CD4-positive, alpha-beta memory T cell (primary cell): ENCODE measurements at regions of chr17 and their contacts with region 1.

Region 1: GRCh38 chr17:47941236-47941994 is at the start of gene PNPO:
- DNase-seq: peak; percentile 93 to 98 (median 94)
- H3K4me3 ChIP-seq: peak within 1 kb of the TSS; percentile 82 to 85
- H3K4me3 Mint-ChIP-seq: peak within 1 kb of the TSS; percentile 77 to 95 (median 88)
- H3K27ac ChIP-seq: peak within 1 kb of the TSS; percentile 76
- H3K27ac Mint-ChIP-seq: peak within 1 kb of the TSS; percentile 62 to 96 (median 92)
- H3K4me1 ChIP-seq: peaks cover 29% of the 10 kb centered on the region
- H3K4me1 Mint-ChIP-seq: peaks cover 20 to 46% (median 32%) of the 10 kb centered on the region in 4 donors
- H3K27me3 ChIP-seq: no peaks in the 10 kb centered on the region
- H3K27me3 Mint-ChIP-seq: no peaks in the 10 kb centered on the region
- total RNA-seq, gene PNPO: 12.1 TPM

Region 2: DNA sequence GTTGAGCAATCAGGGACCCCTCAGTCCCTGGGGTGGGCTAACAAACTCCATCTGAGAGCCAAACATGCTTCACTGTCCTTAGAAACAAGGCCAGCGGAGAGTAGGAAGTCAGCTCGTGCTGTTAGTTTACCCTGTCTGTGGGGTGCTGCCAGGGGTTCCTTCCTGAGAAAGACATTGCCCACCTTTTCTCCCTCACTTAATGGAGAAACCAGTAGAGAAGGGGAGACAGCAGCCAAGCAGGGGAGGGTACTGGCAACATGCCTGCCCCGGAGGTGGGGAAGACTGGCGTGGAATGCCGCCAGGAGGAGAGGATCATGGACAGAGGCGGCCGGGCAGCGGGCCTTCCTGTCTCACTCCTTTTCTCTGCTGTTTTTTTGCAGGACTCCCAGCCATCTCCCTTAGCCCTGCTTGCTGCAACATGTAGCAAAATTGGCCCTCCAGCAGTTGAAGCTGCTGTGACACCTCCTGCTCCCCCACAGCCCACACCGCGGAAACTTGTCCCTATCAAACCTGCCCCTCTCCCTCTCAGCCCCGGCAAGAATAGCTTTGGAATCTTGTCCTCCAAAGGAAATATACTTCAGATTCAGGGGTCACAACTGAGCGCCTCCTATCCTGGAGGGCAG is 25.5 kb before region 1 on chr17:
- CTCF ChIA-PET with region 1: interaction called, 18 read pairs
- POLR2A ChIA-PET with region 1: no interaction called
- intact Hi-C with region 1: no loop called
- DNase-seq: no peak
- H3K4me3 ChIP-seq: no peak overlapping the region
- H3K4me3 Mint-ChIP-seq: no peak overlapping the region
- H3K27ac ChIP-seq: no peak overlapping the region
- H3K27ac Mint-ChIP-seq: peak overlapping the region in 5 of 7 donors; percentile 22 to 75 (median 23)
- H3K4me1 ChIP-seq: peaks cover 12% of the 10 kb centered on the region
- H3K4me1 Mint-ChIP-seq: peaks cover 14 to 30% (median 17%) of the 10 kb centered on the region in 4 donors
- H3K27me3 ChIP-seq: no peaks in the 10 kb centered on the region
- H3K27me3 Mint-ChIP-seq: no peaks in the 10 kb centered on the region

Region 3: DNA sequence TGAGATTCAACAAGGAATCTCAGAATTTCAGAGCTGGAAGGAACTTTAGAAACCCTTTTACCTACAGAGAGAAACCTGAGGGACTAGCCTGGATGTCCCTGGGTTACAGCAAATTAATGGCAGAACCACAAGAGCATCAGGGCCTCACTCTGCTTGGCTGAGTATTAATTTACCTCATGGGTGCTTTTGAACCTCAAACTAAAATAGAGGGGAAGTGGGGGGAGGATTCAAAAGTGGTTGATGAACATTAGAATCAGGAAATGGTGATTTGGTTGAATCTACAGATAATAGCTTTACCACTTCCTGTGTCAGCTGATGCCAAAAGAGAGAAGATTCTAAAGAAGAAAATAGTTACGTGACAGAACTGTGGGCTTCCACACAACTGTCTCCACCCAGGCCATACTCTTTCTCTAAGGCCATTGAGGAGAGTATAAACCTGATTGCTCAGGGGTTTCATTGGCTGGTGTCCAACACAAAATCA is 499.9 kb after region 1 on chr17:
- CTCF ChIA-PET with region 1: no interaction called
- POLR2A ChIA-PET with region 1: no interaction called
- intact Hi-C with region 1: no loop called
- DNase-seq: peak; percentile 83 to 91 (median 88)
- H3K4me3 ChIP-seq: peak overlapping the region; percentile 8 to 35
- H3K4me3 Mint-ChIP-seq: peak overlapping the region; percentile 56 to 87 (median 82)
- H3K27ac ChIP-seq: peak overlapping the region; percentile 70
- H3K27ac Mint-ChIP-seq: peak overlapping the region; percentile 97 to 100 (median 99)
- H3K4me1 ChIP-seq: peaks cover 98% of the 10 kb centered on the region
- H3K4me1 Mint-ChIP-seq: peaks cover 84 to 97% (median 94%) of the 10 kb centered on the region in 4 donors
- H3K27me3 ChIP-seq: no peaks in the 10 kb centered on the region
- H3K27me3 Mint-ChIP-seq: no peaks in the 10 kb centered on the region

Region 4: DNA sequence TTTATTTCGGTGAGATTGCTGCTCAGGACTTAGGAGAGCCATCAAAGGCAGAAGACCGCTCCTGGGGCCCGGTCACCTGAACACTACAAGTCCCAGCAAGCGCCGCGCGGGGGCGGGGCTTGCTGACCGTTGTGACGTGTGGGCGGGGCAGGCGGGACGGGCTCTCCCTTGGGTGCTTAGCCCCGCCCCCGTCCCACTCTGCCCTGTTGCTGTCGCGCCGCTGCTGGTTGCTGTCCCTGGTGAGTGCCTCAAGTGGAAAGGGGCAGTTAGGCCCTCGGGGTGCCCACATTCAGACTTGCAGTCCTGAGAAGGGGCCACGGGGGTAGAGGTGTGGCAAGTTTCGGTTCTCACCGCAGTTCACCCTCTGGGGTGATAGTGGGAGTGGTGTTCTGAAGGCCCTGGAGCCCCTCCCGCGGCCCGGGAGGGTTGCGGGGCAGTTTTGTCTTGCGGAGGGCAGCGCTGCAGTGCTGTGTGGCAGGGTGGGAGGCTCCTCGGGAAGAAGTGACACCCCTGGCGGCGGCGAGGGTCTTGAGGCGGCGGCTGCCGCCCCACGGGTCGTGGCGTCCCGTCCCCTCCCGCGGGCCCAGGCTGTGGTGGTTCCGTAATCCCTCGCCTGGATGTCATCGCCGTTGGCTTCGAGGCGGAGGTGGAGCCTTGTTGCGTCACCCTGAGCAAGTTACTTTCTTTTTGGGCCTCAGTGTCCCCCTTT is 889.6 kb after region 1 on chr17 and contains the start of gene CALCOCO2:
- CTCF ChIA-PET with region 1: no interaction called
- POLR2A ChIA-PET with region 1: no interaction called
- intact Hi-C with region 1: loop called (anchors 5 kb)
- DNase-seq: peak; percentile 78 to 85 (median 81)
- H3K4me3 ChIP-seq: peak within 1 kb of the TSS; percentile 74 to 82
- H3K4me3 Mint-ChIP-seq: peak within 1 kb of the TSS; percentile 96 to 99 (median 98)
- H3K27ac ChIP-seq: peak within 1 kb of the TSS; percentile 98
- H3K27ac Mint-ChIP-seq: peak within 1 kb of the TSS; percentile 94 to 100 (median 99)
- H3K4me1 ChIP-seq: peaks cover 46% of the 10 kb centered on the region
- H3K4me1 Mint-ChIP-seq: peaks cover 22 to 54% (median 42%) of the 10 kb centered on the region in 4 donors
- H3K27me3 ChIP-seq: no peaks in the 10 kb centered on the region
- H3K27me3 Mint-ChIP-seq: peaks cover 2 to 5% of the 10 kb centered on the region in 2 donors
- total RNA-seq, gene CALCOCO2: 107 to 118 TPM